A549 (cell line): ENCODE measurements at regions of chr10 and their contacts with region 1.

Region 1: GRCh38 chr10:3197348-3198003 is 24.9 kb upstream of the PITRM1 start:
- DNase-seq: peak; percentile 78 to 92
- ATAC-seq: peak; percentile 96 to 98
- H3K4me3 ChIP-seq: peak overlapping the region; percentile 28; the same call in 2 of the 3 replicates
- H3K27ac ChIP-seq: peak overlapping the region; percentile 66 to 80
- H3K4me1 ChIP-seq: peaks cover 18% of the 10 kb centered on the region
- CTCF ChIP-seq: peak; percentile 93
- EP300 ChIP-seq: no peak; a peak in 1 of 5 replicates
- POLR2A ChIP-seq: no peak
- RAD21 ChIP-seq: peak; percentile 96 to 99

Region 2: DNA sequence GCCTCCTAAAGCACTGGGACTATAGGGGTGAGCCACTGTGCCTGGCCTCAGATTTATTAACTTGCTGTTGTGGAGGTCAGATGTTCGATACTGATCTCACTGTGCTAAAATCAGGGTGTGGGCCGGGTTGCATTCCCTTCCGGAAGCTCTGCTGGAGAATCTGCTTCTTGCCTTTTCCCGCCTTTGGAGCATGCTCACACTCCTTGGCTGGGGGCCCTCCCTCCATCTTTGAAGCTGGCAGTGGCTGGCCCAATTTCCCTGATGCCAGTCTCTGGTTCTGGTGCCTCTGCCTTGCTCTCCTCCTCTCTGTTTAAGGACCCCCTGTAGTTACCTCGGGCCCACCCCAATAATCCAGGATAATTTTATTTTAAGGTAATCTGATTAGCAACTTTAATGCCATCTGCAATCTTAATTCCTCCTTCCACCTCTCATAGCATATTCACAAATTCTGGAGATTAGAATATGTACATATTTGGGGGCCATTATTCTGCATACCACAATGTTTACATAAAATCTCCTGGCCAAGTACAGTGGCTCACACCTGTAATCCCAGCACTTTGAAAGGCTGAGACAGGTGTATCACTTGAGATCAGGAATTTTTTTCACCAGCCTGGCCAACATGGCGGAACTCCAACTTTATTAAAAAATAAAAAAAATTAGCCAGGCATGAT is 17.0 kb before region 1 on chr10:
- CTCF ChIA-PET with region 1: interaction called, 10 read pairs
- POLR2A ChIA-PET with region 1: no interaction called
- DNase-seq: no peak
- ATAC-seq: no peak
- H3K4me3 ChIP-seq: no peak overlapping the region
- H3K27ac ChIP-seq: no peak overlapping the region
- H3K4me1 ChIP-seq: no peaks in the 10 kb centered on the region
- CTCF ChIP-seq: no peak
- EP300 ChIP-seq: no peak
- POLR2A ChIP-seq: no peak
- RAD21 ChIP-seq: no peak

Region 3: GRCh38 chr10:3217301-3217700 is 19.8 kb after region 1 on chr10:
- CTCF ChIA-PET with region 1: interaction called, 43 read pairs
- POLR2A ChIA-PET with region 1: no interaction called
- DNase-seq: no peak
- ATAC-seq: 0 out of 6 replicates have a peak, but pooled peaks of 1 of the 2 experiments have one; percentile 54
- H3K4me3 ChIP-seq: no peak overlapping the region
- H3K27ac ChIP-seq: no peak overlapping the region
- H3K4me1 ChIP-seq: no peaks in the 10 kb centered on the region
- CTCF ChIP-seq: no peak
- EP300 ChIP-seq: no peak
- POLR2A ChIP-seq: no peak
- RAD21 ChIP-seq: no peak

Region 4: DNA sequence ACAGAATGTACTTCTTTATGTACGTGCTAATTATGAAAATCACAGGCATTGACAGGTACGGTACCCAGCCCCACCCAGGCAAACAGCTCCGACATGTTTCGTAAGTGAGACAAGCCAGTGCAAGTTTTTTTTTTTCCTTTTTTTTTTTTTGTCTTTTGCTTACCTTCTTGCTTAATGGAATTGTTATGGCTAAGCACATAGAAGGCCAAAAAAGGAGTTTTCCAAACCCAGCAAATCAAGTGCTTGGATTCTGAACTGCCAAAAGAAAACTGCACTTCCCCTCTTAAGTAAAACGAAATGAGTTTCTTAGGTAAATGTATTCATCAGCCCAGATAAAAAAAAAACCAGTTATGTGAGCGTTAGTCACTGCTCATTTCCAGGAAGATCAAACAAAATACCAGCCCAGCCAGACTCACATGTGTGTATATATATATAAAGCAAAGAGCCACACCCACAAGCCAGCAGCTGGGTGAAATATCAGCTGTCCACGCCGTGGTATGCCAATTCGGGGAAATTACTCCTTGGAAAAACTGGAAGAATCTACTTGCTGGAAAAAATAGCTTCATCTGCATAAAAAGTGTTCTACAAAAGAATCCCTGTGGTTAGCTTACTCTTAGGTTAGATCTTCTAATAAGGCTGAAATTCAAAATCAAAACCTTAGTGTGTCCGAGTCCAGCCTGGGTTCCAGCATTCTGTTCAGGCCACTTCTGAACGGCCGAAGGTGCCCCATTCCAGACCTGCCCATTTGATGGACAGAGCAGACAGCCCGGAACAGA is 579.5 kb after region 1 on chr10:
- CTCF ChIA-PET with region 1: interaction called, 13 read pairs
- POLR2A ChIA-PET with region 1: interaction called, 4 read pairs
- DNase-seq: peak in 1 of 2 experiments; percentile 75
- ATAC-seq: 0 out of 6 replicates have a peak, but pooled peaks of 1 of the 2 experiments have one; percentile 30
- H3K4me3 ChIP-seq: no peak overlapping the region
- H3K27ac ChIP-seq: peak overlapping the region; percentile 50 to 67; a peak in 4 of 6 replicates
- H3K4me1 ChIP-seq: peaks cover 72% of the 10 kb centered on the region
- CTCF ChIP-seq: no peak
- EP300 ChIP-seq: peak; percentile 16 to 44; a peak in 2 of 5 replicates
- POLR2A ChIP-seq: no peak
- RAD21 ChIP-seq: peak in 1 of 2 experiments; percentile 34; a peak in 2 of 5 replicates

Region 5: DNA sequence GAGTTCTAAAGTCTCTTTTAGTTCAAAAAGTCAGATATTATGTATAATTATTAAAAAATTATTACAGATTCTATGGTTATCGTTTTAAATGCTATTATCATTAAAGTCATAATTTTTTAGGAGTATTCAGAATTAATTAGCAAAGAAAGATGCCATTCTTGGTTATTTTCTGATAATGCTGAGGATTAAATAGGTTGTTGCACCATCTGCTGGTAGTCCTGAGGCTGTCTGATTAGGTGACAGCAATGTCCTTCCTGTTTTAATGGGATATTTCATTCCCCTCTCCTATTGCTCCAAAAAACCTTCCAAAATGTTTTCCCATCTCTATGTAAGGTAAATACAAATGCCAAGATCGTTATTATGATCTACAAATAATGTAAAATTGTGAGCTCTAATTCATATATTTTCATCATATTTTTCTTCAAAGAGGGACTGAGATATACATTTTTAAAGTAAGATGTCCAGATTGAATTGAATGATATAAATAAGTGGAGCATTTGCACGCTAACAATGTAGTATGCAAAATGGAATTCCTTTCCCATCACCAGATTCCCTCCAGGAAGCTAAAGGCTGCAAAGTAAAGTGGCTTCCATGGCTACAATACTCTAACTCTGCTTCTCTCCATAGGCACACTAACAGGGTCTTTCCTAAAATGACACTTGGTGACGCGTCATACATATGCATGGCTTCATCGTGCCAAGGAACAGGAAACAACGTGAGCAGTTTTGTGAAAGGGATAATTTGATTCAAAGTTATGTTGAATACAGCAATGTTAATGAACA is 1569.7 kb after region 1 on chr10:
- CTCF ChIA-PET with region 1: interaction called, 127 read pairs
- POLR2A ChIA-PET with region 1: no interaction called
- DNase-seq: peak; percentile 13 to 57
- ATAC-seq: peak in 1 of 2 experiments; percentile 66; a peak in 3 of 6 replicates
- H3K4me3 ChIP-seq: no peak overlapping the region
- H3K27ac ChIP-seq: peak overlapping the region; percentile 59 to 72
- H3K4me1 ChIP-seq: peaks cover 43% of the 10 kb centered on the region
- CTCF ChIP-seq: peak; percentile 93
- EP300 ChIP-seq: no peak
- POLR2A ChIP-seq: no peak
- RAD21 ChIP-seq: peak; percentile 97